Heart left ventricle (tissue), 16 donors: ENCODE measurements at regions of chr10 and their contacts with region 1.

Region 1: DNA sequence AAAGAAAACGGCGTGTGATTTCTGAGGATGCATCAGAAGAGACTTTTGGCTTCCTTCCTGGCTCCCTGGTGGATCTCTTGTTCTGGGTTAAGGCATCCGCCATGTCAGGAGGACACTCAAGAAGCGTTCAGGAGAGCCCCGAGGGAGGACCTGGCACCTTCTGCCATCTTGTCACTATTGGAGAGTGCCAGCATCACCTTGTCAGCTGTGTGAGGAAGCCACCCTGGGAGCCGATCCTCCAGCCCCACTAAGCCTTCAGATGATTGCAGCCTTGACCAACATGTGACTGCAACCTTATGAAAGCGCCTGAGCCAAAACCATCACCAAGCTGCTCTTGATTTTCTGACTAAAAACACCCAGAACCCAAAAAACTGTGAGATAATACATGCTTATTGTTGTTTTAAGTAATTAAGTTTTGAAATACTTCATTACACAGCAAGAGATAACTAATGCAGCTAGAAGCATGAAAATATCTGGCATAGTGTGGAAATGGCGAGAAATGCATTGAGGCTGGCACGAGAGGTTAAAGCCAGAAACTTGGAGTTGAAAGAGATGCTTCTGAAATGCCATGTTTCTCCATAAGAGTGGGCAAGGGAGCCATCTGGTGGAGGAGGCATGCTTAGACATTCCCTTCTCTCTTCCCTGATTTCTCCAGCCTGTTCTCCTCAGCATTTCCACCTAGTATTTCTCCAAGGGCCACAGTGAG is 5.4 kb upstream of the ZFYVE27 start:
- DNase-seq: peak in 3 of 5 donors; percentile 64 to 75 (median 72)
- ATAC-seq: peak in 3 of 4 donors; percentile 74 to 81 (median 74)
- H3K4me3 ChIP-seq: no peak overlapping the region
- H3K27ac ChIP-seq: no peak overlapping the region
- H3K4me1 ChIP-seq: peaks cover 0 to 9% (median under 1%) of the 10 kb centered on the region in 12 donors
- H3K27me3 ChIP-seq: no peaks in the 10 kb centered on the region
- CTCF ChIP-seq: peak; percentile 67 to 92 (median 82)
- POLR2A ChIP-seq: no peak

Region 2: DNA sequence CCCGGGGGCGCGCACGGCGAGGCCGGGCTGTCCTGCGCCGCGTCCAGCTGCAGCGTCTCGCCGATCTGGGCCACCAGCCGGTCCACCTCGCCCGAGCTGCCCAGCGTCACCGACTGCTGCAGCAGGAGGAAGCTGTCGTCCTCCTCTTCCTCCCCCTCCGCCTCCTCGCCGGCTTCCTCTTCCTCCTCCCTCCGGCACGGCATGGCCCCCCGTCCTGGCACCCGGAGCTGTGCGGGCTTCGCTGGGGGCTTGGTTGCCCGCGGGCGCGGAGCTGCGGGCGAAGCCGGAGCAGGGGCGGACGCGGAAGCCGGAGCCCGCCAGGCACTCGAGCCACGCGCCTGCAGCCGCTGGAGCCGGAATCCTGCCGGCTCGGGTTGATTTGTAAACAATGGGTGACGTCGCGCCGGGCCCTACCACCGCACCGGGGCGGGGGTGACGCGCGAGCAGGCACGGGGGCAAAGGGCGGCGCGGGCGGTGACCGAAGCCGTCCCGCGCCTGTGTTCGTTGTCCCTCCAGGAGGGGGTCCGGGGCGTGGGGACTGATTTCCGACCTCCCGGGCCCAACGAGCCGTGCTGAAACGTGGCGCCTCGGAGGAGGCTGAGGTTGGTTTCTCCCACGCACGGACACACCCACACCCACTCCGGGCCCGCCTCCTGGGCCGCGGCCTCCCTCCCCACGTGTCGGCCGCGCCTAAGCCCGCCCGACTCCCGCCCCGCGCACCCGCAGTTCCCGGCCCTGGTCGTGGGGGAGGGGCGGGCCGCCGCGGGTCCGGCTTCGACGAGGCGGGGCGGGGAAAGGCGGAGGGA is 396.9 kb before region 1 on chr10 and contains the start of gene FRAT2:
- intact Hi-C with region 1: no loop called
- DNase-seq: peak; percentile 93 to 96 (median 94)
- ATAC-seq: peak; percentile 94 to 97 (median 96)
- H3K4me3 ChIP-seq: peak within 1 kb of the TSS; percentile 67 to 100 (median 90)
- H3K27ac ChIP-seq: peak within 1 kb of the TSS; percentile 88 to 99 (median 95)
- H3K4me1 ChIP-seq: peaks cover 2 to 68% (median 38%) of the 10 kb centered on the region in 12 donors
- H3K27me3 ChIP-seq: no peaks in the 10 kb centered on the region
- CTCF ChIP-seq: no peak
- POLR2A ChIP-seq: peak in 1 of 2 donors; percentile 83
- total RNA-seq, gene FRAT2: 4.4 to 12.4 (median 7.5) TPM

Region 3: GRCh38 chr10:97572214-97572989 is 159.1 kb before region 1 on chr10 and contains the start of gene ANKRD2:
- intact Hi-C with region 1: loop called in 1 of 10 experiments (anchors 5 kb)
- DNase-seq: peak; percentile 82 to 92 (median 87)
- ATAC-seq: peak; percentile 64 to 76 (median 72)
- H3K4me3 ChIP-seq: peak within 1 kb of the TSS in 9 of 12 donors; percentile 13 to 43 (median 36)
- H3K27ac ChIP-seq: peak within 1 kb of the TSS; percentile 71 to 95 (median 88)
- H3K4me1 ChIP-seq: peaks cover 0 to 50% (median 24%) of the 10 kb centered on the region in 12 donors
- H3K27me3 ChIP-seq: no peaks in the 10 kb centered on the region
- CTCF ChIP-seq: peak; percentile 69 to 85 (median 80)
- POLR2A ChIP-seq: no peak
- total RNA-seq, gene ANKRD2: 56.7 to 2,367 (median 517) TPM

Region 4: DNA sequence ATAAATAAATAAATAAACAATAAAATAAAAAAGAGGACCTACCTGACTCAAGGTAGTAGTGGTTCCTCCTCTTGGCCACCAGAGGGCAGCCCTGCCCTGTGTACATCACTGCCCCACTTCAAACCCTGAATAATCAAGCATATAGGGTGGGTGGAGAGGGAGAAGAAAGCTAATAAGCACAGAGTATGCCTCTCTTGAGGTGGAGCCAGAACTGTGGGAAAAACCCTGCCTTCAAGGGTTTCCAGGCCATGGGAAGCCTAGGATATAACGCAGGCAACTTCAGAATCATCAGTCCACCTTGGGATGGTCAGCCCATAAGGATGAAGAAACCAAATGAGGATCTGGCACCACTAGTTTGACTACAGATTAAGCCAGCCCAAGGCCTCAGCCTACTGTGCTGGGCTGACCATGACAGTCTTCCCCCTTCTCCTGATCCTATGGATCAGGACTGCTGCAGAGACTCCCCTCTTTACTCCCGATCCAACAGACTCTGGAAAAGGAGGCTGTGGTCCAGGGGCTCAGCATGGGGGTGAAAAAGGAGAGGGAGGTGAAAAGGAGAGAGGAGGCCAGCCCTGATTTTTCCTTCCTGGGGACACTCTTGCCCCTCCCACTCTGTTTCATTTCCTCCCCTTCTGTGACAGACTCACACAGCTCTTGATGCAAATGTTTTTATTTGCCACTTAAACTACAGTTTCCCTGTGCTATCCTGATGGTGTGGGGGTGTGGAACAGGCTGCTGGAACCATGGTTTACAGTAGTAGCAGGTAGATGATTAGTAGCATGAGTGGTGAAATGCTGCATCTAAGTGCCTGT is 54.5 kb before region 1 on chr10:
- intact Hi-C with region 1: loop called in 9 of 10 experiments (anchors 1 to 2 kb)
- DNase-seq: peak in 1 of 5 donors; percentile 44
- ATAC-seq: peak in 3 of 4 donors; percentile 64 to 74 (median 69)
- H3K4me3 ChIP-seq: no peak overlapping the region
- H3K27ac ChIP-seq: no peak overlapping the region
- H3K4me1 ChIP-seq: peaks cover 0 to 20% (median 0%) of the 10 kb centered on the region in 12 donors
- H3K27me3 ChIP-seq: no peaks in the 10 kb centered on the region
- CTCF ChIP-seq: peak; percentile 81 to 94 (median 88)
- POLR2A ChIP-seq: no peak

Region 5: DNA sequence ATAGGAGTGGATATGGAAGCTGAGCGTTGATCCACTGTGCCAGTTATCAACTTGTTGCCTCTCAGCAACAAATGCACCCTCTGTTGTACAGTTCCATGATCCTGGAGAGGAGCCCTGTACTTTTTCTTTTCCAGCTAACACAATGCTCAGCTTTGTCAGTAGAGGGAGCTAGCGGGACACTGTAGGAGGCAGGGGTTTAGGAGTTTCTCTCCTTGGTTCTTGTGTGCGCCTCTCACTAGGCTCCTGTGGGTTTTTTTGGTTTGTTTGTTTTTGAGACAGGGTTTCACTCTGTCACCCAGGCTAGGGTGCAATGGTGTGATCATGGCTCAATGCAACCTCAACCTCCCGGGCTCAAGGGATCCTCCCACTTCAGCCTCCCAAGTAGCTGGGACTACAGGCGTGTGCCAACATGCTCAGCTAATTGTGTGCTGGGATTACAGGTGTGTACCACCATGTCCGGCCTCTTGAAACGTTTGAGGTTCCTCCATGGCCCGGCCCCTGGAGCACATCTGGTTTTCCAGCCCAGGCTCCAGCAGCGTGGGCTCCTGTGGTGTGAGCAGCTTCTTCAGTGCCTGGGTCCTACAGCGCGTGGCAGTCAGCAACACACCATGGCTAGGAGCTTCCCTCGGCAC is 29.9 kb before region 1 on chr10:
- intact Hi-C with region 1: loop called in 5 of 10 experiments (anchors 2 to 5 kb)
- DNase-seq: peak in 1 of 5 donors; percentile 41
- ATAC-seq: peak; percentile 61 to 93 (median 91)
- H3K4me3 ChIP-seq: no peak overlapping the region
- H3K27ac ChIP-seq: no peak overlapping the region
- H3K4me1 ChIP-seq: peaks cover 0 to 7% (median 0%) of the 10 kb centered on the region in 12 donors
- H3K27me3 ChIP-seq: no peaks in the 10 kb centered on the region
- CTCF ChIP-seq: peak; percentile 67 to 89 (median 80)
- POLR2A ChIP-seq: no peak

Region 6: GRCh38 chr10:97714048-97714371 is 17.5 kb before region 1 on chr10:
- intact Hi-C with region 1: loop called in 8 of 10 experiments (anchors 1 to 2 kb)
- DNase-seq: peak; percentile 72 to 84 (median 76)
- ATAC-seq: peak in 3 of 4 donors; percentile 70 to 79 (median 70)
- H3K4me3 ChIP-seq: peak overlapping the region; percentile 50 to 86 (median 68)
- H3K27ac ChIP-seq: peak overlapping the region; percentile 81 to 98 (median 92)
- H3K4me1 ChIP-seq: peaks cover 0 to 68% (median 33%) of the 10 kb centered on the region in 12 donors
- H3K27me3 ChIP-seq: no peaks in the 10 kb centered on the region
- CTCF ChIP-seq: peak in 5 of 12 donors; percentile 22 to 40 (median 30)
- POLR2A ChIP-seq: no peak